HEK293T (cell line): ENCODE measurements at regions of chr11 and their contacts with region 1.

Region 1: GRCh38 chr11:14907411-14908213 is 15.6 kb upstream of the CYP2R1 start:
- DNase-seq: peak; percentile 49

Region 2: GRCh38 chr11:14764579-14765527 is 142.8 kb before region 1 on chr11:
- CTCF ChIA-PET with region 1: interaction called, 10 read pairs
- POLR2A ChIA-PET with region 1: no interaction called
- DNase-seq: peak; percentile 11

Region 3: GRCh38 chr11:14872032-14872431 is 35.6 kb before region 1 on chr11:
- CTCF ChIA-PET with region 1: no interaction called
- POLR2A ChIA-PET with region 1: no interaction called
- DNase-seq: no peak

Region 4: DNA sequence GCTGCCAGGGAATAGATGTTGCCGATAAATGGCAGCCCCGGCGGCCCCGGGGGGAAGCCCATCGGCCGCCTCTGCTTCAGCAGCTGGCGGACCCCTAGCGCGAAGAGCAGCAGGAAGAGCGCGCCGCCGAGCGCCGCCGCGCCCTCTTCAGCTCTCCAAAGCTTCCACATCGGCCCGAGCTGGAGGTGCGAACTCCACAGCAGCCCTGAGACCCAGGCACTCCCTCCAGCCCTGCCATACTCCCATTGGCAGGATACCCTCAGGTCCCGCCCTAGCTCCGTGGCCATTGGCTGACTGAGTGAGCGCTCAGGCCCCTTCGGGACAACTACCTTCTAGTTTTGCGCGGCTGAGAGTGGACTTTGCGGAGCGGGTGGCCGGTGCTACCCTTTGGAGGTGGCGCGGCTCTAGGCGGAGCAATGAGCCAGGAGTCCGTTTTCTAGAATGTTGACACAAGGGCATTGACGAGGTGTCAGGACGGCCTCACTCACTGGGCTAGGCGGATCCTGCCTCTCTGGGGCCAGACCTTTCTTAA is 15.5 kb before region 1 on chr11 and contains the start of gene CYP2R1:
- CTCF ChIA-PET with region 1: interaction called, 10 read pairs
- POLR2A ChIA-PET with region 1: interaction called, 16 read pairs
- DNase-seq: peak; percentile 94

Region 5: GRCh38 chr11:15006139-15006759 is 98.6 kb after region 1 on chr11:
- CTCF ChIA-PET with region 1: interaction called, 11 read pairs
- POLR2A ChIA-PET with region 1: no interaction called
- DNase-seq: peak; percentile 39

Region 6: GRCh38 chr11:15101072-15101709 is 193.6 kb after region 1 on chr11:
- CTCF ChIA-PET with region 1: interaction called, 15 read pairs
- POLR2A ChIA-PET with region 1: no interaction called
- DNase-seq: peak; percentile 81